Activated CD4-positive, alpha-beta T cell treated with anti-CD3 and anti-CD28 coated beads for 36 hours (primary cell): ENCODE measurements at regions of chr7 and their contacts with region 1.

Region 1: DNA sequence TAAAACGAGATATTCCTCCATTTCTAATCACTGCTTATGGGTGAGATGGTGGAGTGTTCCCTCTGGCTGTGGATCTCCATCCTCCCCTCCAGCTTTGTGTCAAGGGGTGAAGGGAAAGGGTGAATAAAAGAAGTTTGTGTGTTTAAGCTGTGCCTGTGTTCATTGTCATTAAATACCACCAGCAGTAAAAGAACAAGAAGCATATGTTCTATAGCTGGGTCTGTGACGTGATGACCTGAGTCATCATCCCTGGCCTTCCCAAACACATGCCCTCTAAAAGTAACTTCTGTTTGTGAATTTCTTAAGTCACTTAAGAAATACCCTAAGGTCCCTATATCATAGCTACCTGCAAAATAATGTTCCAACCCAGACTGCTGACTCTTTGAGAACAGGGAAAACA is 104.9 kb downstream of the PPP1R17 start:
- DNase-seq: no peak
- ATAC-seq: no peak
- H3K4me3 Mint-ChIP-seq: no peak overlapping the region
- H3K27ac Mint-ChIP-seq: no peak overlapping the region
- H3K4me1 Mint-ChIP-seq: no peaks in the 10 kb centered on the region
- H3K27me3 Mint-ChIP-seq: peaks cover 2% of the 10 kb centered on the region

Region 2: DNA sequence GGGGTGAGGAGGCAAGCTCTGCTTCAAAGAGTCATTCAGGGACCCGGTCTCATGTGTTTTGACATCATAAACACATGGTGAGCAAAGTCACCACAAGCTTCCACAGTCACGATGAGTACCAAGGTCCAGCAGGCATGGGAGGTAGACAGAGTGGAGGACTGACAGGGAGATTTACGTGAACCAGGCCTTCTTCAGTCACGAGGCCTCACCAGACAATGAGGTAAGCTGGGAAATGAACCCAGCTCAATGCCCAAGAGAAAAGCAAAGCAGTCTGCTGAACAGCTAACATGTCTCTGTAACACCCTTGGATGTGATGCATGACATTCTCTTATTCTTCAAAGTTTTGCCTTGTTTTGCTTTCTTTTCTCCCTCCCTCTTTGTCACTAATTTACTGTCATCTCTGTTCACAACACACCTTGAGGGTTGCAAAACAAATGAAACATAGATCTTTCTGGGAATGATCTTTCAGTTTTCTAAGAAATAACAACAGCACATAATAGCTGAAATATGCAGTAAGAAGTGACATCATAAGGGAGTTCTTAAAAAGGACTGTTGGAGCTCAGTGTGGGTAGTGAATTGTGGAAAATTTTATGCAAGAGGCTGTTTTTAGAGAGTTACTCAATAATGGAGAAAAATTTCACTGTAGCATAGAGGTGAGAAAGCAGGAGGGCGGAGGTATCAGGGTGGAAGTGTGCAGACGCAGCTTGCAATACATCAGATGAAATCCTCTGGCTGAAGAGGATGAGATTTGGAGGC is 95.8 kb before region 1 on chr7:
- CTCF ChIA-PET with region 1: no interaction called
- POLR2A ChIA-PET with region 1: no interaction called
- intact Hi-C with region 1: no loop called
- DNase-seq: no peak
- ATAC-seq: no peak
- H3K4me3 Mint-ChIP-seq: no peak overlapping the region
- H3K27ac Mint-ChIP-seq: no peak overlapping the region
- H3K4me1 Mint-ChIP-seq: no peaks in the 10 kb centered on the region
- H3K27me3 Mint-ChIP-seq: peaks cover 2% of the 10 kb centered on the region

Region 3: DNA sequence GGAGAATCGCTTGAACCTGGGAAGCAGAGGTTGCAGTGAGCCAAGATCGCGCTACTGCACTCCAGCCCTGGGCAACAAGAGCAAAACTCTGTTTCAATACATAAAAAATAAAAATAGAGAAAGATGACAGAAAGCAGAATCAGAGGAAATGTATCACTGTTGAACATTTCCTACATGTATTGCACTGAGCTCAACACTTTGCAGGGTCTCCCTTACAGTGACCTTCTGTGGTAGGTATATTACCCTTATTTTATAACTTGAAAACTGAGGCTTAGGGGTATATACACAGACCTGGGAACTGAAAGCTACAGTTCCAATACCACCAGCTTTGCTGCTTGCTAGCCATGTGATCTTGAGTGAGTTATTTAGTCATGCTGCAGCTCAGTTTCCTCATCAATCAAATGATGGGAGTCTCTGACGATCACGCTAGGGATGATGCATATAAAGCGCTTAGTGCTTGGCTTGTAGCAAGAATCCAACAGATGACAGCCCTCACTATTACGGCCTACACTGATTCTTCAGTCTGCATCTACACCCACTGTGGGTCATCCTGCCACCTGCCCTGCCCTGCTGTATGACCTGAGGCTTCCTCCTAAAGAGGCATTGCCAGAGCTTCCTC is 179.3 kb after region 1 on chr7:
- CTCF ChIA-PET with region 1: no interaction called
- POLR2A ChIA-PET with region 1: no interaction called
- intact Hi-C with region 1: loop called in 1 of 2 experiments (anchors 10 kb)
- DNase-seq: no peak
- ATAC-seq: no peak
- H3K4me3 Mint-ChIP-seq: no peak overlapping the region
- H3K27ac Mint-ChIP-seq: no peak overlapping the region
- H3K4me1 Mint-ChIP-seq: no peaks in the 10 kb centered on the region
- H3K27me3 Mint-ChIP-seq: no peaks in the 10 kb centered on the region